ENCODE measurements at regions of chr20 and their contacts with region 1.

Region 1: GRCh38 chr20:8389381-8390036 is 257.4 kb downstream of the PLCB1 start:
- DNase-seq: no peak
- ATAC-seq: no peak
- H3K4me3 Mint-ChIP-seq: no peak overlapping the region
- H3K27ac Mint-ChIP-seq: no peak overlapping the region
- H3K4me1 Mint-ChIP-seq: peaks cover 6% of the 10 kb centered on the region
- H3K27me3 Mint-ChIP-seq: peaks cover 3% of the 10 kb centered on the region

Region 2: GRCh38 chr20:8131598-8132483 is 257.7 kb before region 1 on chr20 and contains the start of gene PLCB1:
- CTCF ChIA-PET with region 1: interaction called, 17 read pairs
- POLR2A ChIA-PET with region 1: no interaction called
- DNase-seq: peak; percentile 84
- ATAC-seq: peak; percentile 95
- H3K4me3 Mint-ChIP-seq: peak within 1 kb of the TSS; percentile 68
- H3K27ac Mint-ChIP-seq: no peak within 1 kb of the TSS
- H3K4me1 Mint-ChIP-seq: peaks cover 17% of the 10 kb centered on the region
- H3K27me3 Mint-ChIP-seq: peaks cover 42% of the 10 kb centered on the region
- total RNA-seq, gene PLCB1: 0.63 to 1.5 TPM

Region 3: GRCh38 chr20:8401556-8401955 is 12.0 kb after region 1 on chr20:
- CTCF ChIA-PET with region 1: interaction called, 36 read pairs
- POLR2A ChIA-PET with region 1: no interaction called
- DNase-seq: no peak
- ATAC-seq: no peak
- H3K4me3 Mint-ChIP-seq: no peak overlapping the region
- H3K27ac Mint-ChIP-seq: no peak overlapping the region
- H3K4me1 Mint-ChIP-seq: peaks cover 8% of the 10 kb centered on the region
- H3K27me3 Mint-ChIP-seq: peaks cover 4% of the 10 kb centered on the region